A673 (cell line): ENCODE measurements at regions of chr17 and their contacts with region 1.

Region 1: DNA sequence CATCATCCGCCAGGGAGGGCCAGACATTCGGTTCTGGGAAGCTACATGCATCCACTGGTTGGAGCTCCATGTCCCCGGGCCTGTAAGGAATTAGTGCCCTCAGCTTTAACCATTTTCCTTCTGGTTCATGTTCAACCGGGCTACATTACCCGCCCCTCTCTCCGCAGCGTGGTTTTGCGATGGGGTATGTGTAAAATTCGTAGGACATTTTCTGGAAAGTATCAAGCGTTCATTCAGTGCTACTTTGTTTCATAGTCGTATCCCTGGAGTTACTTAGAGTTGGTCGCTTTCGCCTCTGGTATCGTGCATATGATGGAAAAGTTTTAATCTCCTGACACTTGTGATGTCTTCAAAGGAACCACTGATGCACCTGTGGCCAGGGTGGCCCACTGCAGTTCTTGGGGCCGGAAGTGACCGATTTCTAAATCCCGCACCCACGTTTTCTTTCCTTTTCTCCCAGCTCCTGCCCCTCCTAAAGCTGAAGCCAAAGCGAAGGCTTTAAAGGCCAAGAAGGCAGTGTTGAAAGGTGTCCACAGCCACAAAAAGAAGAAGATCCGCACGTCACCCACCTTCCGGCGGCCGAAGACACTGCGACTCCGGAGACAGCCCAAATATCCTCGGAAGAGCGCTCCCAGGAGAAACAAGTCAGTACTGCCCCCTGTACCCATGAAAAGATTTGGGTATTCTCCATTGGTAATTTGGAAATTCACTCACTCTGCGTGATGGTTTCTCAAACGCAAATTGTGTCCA is 637 bp downstream of the RPL23A start:
- DNase-seq: no peak
- H3K4me3 ChIP-seq: peak overlapping the region; percentile 72
- H3K27ac ChIP-seq: peak overlapping the region; percentile 81
- H3K4me1 ChIP-seq: peaks cover 58% of the 10 kb centered on the region
- H3K27me3 ChIP-seq: no peaks in the 10 kb centered on the region
- CTCF ChIP-seq: 0 out of 2 replicates have a peak, but pooled peaks have one; percentile 16

Region 2: GRCh38 chr17:27919079-27919478 is 801.3 kb before region 1 on chr17:
- CTCF ChIA-PET with region 1: no interaction called
- POLR2A ChIA-PET with region 1: interaction called, 10 read pairs
- intact Hi-C with region 1: no loop called
- DNase-seq: no peak
- H3K4me3 ChIP-seq: no peak overlapping the region
- H3K27ac ChIP-seq: no peak overlapping the region
- H3K4me1 ChIP-seq: no peaks in the 10 kb centered on the region
- H3K27me3 ChIP-seq: no peaks in the 10 kb centered on the region
- CTCF ChIP-seq: no peak

Region 3: DNA sequence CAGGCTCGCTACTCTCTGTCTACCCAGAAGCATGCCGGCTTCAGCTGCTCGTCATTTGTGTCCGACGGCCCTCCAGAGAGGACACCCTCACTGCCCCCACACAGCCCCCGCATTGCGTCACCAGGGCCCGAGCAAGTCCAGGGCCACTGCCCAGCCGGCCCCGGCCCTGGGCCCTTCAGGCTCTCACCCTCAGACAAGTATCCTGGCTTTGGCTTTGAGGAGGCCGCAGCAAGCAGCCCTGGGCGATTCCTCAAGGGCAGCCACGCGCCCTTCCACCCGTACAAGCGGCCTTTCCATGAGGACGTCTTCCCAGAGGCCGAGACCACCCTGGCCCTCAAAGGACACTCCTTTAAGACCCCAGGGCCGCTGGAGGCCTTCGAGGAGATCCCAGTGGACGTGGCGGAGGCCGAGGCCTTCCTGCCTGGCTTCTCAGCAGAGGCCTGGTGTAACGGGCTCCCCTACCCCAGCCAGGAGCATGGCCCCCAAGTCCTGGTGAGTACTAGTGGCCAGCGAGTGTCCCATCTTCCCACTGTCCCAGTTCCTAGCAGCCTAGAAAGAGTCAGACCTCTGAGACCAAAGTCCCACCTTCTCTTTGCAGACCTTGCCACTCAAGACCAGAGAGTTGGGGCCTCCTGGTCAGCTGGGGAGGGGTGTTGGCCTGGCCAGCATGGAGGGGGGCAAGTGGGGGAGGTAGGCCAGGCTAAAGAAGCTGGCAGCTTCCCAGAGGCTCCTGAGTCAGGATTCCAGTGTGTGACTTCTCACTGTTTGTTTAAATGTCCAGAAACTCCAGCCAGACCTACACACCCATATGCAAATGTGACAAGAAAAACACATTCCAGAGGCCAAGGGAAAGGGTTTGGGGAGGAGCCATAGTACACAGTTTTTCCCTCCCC is 195.7 kb before region 1 on chr17:
- CTCF ChIA-PET with region 1: no interaction called
- POLR2A ChIA-PET with region 1: no interaction called
- intact Hi-C with region 1: no loop called
- DNase-seq: no peak
- H3K4me3 ChIP-seq: no peak overlapping the region
- H3K27ac ChIP-seq: no peak overlapping the region
- H3K4me1 ChIP-seq: no peaks in the 10 kb centered on the region
- H3K27me3 ChIP-seq: no peaks in the 10 kb centered on the region
- CTCF ChIP-seq: no peak

Region 4: GRCh38 chr17:28828294-28829040 is 108.0 kb after region 1 on chr17:
- CTCF ChIA-PET with region 1: no interaction called
- POLR2A ChIA-PET with region 1: interaction called, 10 read pairs
- intact Hi-C with region 1: no loop called
- DNase-seq: no peak
- H3K4me3 ChIP-seq: no peak overlapping the region
- H3K27ac ChIP-seq: no peak overlapping the region
- H3K4me1 ChIP-seq: no peaks in the 10 kb centered on the region
- H3K27me3 ChIP-seq: no peaks in the 10 kb centered on the region
- CTCF ChIP-seq: no peak

Region 5: DNA sequence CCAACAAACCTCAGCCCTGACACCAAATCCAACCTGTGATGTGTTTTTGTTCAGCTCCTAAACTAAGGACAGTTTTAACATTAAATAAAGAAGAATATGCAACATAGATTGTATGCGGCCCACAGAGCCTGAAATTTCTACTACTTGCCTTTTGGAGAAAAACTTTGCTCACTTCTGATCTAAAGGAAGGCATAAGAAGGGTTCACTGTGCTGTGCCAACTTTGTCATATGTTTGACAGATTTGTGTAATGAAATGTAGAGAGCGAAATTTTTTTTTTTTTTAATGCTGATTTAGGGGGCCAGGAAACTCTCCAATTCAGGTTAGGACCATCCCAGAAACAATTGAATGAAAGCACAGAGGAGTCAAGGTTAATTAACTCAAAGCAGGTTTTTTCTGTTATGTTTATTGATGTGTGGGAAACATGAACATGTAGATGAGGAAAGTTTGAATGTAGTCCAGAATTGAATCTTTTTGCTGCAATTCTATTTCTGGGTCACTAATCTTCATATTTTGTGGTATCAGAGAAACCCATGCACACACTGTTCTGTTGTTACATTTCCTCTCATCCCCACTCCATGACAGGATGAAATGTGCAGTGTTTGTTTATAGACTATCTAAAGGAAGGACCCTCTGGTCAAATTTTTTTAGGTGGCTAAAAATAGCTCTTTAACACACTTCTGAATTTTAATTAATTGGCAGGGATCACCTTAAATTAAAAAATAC is 741.2 kb after region 1 on chr17:
- CTCF ChIA-PET with region 1: no interaction called
- POLR2A ChIA-PET with region 1: no interaction called
- intact Hi-C with region 1: no loop called
- DNase-seq: no peak
- H3K4me3 ChIP-seq: no peak overlapping the region
- H3K27ac ChIP-seq: no peak overlapping the region
- H3K4me1 ChIP-seq: peaks cover 21% of the 10 kb centered on the region
- H3K27me3 ChIP-seq: no peaks in the 10 kb centered on the region
- CTCF ChIP-seq: no peak

Region 6: DNA sequence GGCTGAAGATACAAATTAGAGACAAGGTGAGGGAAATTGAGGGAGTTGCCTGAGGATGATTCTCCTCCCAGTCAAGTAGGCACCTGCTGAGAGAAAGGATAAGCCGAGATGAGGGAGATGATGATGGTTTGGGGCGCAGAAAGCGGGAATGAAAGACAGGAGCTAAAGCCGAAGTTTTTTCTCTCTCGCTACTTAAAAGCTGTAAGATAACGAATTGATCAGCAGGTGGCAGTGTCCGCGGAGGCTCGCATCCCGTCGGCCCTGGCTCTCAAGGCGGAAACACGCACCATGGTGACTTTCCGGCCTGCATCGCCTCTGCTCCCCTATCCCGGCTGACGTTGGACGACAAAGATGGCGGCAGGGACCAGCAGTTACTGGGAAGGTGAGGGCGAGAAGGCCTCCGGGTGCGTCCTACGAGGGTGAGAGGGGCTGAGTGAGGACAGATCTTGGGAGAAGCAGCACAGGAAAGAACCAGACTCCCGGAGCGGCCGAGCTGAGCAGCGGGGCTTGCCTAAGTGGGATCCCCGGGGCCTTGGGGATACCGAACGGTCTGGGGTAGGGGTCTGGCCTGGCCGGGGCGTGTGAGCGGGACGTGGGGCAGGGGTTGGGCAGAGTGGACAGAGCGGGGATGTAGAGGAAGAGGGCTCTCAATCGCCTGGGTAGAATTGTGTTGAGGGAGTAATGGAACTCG is 1756.8 kb after region 1 on chr17 and contains the start of gene GOSR1:
- CTCF ChIA-PET with region 1: no interaction called
- POLR2A ChIA-PET with region 1: interaction called, 17 read pairs
- intact Hi-C with region 1: no loop called
- DNase-seq: peak; percentile 97
- H3K4me3 ChIP-seq: peak within 1 kb of the TSS; percentile 89
- H3K27ac ChIP-seq: peak within 1 kb of the TSS; percentile 95
- H3K4me1 ChIP-seq: no peaks in the 10 kb centered on the region
- H3K27me3 ChIP-seq: no peaks in the 10 kb centered on the region
- CTCF ChIP-seq: peak; percentile 84
- total RNA-seq, gene GOSR1: 61.2 and 69.1 TPM in 2 replicates